WTC11 (cell line): ENCODE measurements at regions of chr6 and their contacts with region 1.

Region 1: DNA sequence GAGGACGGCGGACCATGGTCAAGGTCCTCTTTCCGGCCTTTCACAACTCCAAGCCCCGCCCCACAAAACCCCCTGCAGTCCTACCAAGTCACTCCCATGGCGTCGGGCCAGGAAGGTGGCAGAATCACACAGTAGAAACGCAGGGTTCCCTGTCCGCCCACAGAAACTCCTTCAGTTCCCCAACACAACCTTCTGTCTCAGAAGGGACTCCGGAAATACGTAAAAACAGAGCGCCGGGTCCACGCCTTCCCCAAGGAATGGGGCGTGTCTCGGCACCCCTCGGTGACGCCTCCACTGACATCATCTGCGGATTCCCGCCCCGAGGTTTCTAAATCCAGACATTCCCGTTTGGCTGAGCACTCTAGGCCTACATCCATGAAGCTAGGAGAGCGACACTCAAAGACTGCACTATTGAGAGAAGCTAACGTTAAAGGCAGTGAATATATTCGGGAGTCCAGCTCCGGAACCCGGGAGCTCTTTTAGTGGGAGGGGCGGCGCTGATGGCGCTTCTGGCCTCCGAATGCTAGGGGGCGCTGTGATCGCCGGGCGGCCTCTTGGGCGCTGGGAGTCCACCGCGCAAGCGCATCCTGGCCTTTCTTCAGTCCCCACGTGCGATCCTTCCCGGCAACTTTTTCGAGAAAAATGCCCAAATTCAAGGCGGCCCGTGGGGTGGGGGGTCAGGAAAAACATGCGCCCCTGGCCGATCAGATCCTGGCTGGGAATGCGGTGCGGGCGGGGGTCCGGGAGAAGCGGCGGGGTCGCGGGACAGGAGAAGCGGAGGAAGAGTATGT is at the starts of genes BYSL and MED20:
- DNase-seq: peak; percentile 92
- ATAC-seq: peak; percentile 83
- H3K4me3 Mint-ChIP-seq: peak within 1 kb of the TSS; percentile 98
- H3K27ac Mint-ChIP-seq: peak within 1 kb of the TSS; percentile 100
- H3K4me1 Mint-ChIP-seq: peaks cover 23% of the 10 kb centered on the region
- H3K27me3 Mint-ChIP-seq: no peaks in the 10 kb centered on the region
- CTCF ChIP-seq: peak; percentile 91
- total RNA-seq, gene BYSL: 40.3 to 50.8 TPM (median 43.8 TPM) in 3 replicates
- total RNA-seq, gene MED20: 37.5 to 42.4 TPM (median 38.9 TPM) in 3 replicates

Region 2: GRCh38 chr6:41895300-41896233 is 25.5 kb before region 1 on chr6 and contains the start of gene USP49:
- CTCF ChIA-PET with region 1: interaction called, 53 read pairs
- POLR2A ChIA-PET with region 1: interaction called, 9 read pairs
- DNase-seq: peak; percentile 95
- ATAC-seq: peak; percentile 84
- H3K4me3 Mint-ChIP-seq: no peak within 1 kb of the TSS
- H3K27ac Mint-ChIP-seq: peak within 1 kb of the TSS; percentile 99
- H3K4me1 Mint-ChIP-seq: peaks cover 21% of the 10 kb centered on the region
- H3K27me3 Mint-ChIP-seq: no peaks in the 10 kb centered on the region
- CTCF ChIP-seq: no peak
- total RNA-seq, gene USP49: 16.3 to 18.4 TPM (median 17.3 TPM) in 3 replicates

Region 3: GRCh38 chr6:41941280-41942066 is 20.4 kb after region 1 on chr6 and contains the start of gene CCND3:
- CTCF ChIA-PET with region 1: interaction called, 112 read pairs
- POLR2A ChIA-PET with region 1: interaction called, 8 read pairs
- DNase-seq: peak; percentile 81
- ATAC-seq: peak; percentile 62
- H3K4me3 Mint-ChIP-seq: peak within 1 kb of the TSS; percentile 92
- H3K27ac Mint-ChIP-seq: peak within 1 kb of the TSS; percentile 46
- H3K4me1 Mint-ChIP-seq: peaks cover 32% of the 10 kb centered on the region
- H3K27me3 Mint-ChIP-seq: no peaks in the 10 kb centered on the region
- CTCF ChIP-seq: no peak
- total RNA-seq, gene CCND3: 23.0 to 33.6 TPM (median 23.0 TPM) in 3 replicates

Region 4: GRCh38 chr6:42030585-42031506 is 109.7 kb after region 1 on chr6:
- CTCF ChIA-PET with region 1: interaction called, 11 read pairs
- POLR2A ChIA-PET with region 1: no interaction called
- DNase-seq: peak; percentile 24
- ATAC-seq: peak; percentile 76
- H3K4me3 Mint-ChIP-seq: no peak overlapping the region
- H3K27ac Mint-ChIP-seq: no peak overlapping the region
- H3K4me1 Mint-ChIP-seq: peaks cover 12% of the 10 kb centered on the region
- H3K27me3 Mint-ChIP-seq: peaks cover 5% of the 10 kb centered on the region; the same call in 1 of the 2 replicates
- CTCF ChIP-seq: no peak

Region 5: GRCh38 chr6:42050266-42051032 is 129.3 kb after region 1 on chr6 and contains the start of gene TAF8:
- CTCF ChIA-PET with region 1: interaction called, 32 read pairs
- POLR2A ChIA-PET with region 1: interaction called, 4 read pairs
- DNase-seq: peak; percentile 88
- ATAC-seq: peak; percentile 81
- H3K4me3 Mint-ChIP-seq: peak within 1 kb of the TSS; percentile 95
- H3K27ac Mint-ChIP-seq: peak within 1 kb of the TSS; percentile 95
- H3K4me1 Mint-ChIP-seq: peaks cover 25% of the 10 kb centered on the region
- H3K27me3 Mint-ChIP-seq: peaks cover 47% of the 10 kb centered on the region
- CTCF ChIP-seq: no peak
- total RNA-seq, gene TAF8: 29.6 to 33.6 TPM (median 31.0 TPM) in 3 replicates

Region 6: DNA sequence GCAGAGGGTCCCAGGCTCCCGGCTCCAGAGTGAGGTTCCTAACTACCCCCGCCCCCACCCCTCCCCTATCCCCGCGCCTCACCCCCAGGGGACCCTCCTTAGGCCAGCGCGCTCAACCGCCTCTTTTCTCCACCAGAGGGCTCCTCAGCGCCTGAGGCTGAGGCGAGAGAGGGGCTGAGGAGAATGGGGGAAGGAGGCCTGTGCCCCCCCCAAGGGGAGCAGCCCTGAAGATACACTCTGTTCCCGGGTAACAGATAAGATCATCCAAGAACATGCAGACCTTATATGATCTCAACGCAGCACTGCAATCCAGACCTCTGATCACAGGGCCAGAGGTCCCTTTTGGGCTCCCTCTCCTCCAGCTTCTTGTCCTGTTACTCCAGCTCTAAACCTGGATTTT is 339.9 kb after region 1 on chr6:
- CTCF ChIA-PET with region 1: no interaction called
- POLR2A ChIA-PET with region 1: no interaction called
- DNase-seq: peak; percentile 79
- ATAC-seq: peak; percentile 71
- H3K4me3 Mint-ChIP-seq: no peak overlapping the region
- H3K27ac Mint-ChIP-seq: no peak overlapping the region
- H3K4me1 Mint-ChIP-seq: peaks cover 43% of the 10 kb centered on the region
- H3K27me3 Mint-ChIP-seq: no peaks in the 10 kb centered on the region
- CTCF ChIP-seq: peak; percentile 46